Breast epithelium (tissue), 4 donors: ENCODE measurements at regions of chr6 and their contacts with region 1.

Region 1: GRCh38 chr6:91731939-91732338 is 1145.1 kb upstream of the MAP3K7 start:
- DNase-seq: no peak
- H3K4me3 ChIP-seq: no peak overlapping the region
- H3K27ac ChIP-seq: no peak overlapping the region
- H3K4me1 ChIP-seq: no peaks in the 10 kb centered on the region
- H3K27me3 ChIP-seq: no peaks in the 10 kb centered on the region
- CTCF ChIP-seq: no peak
- POLR2A ChIP-seq: no peak

Region 2: DNA sequence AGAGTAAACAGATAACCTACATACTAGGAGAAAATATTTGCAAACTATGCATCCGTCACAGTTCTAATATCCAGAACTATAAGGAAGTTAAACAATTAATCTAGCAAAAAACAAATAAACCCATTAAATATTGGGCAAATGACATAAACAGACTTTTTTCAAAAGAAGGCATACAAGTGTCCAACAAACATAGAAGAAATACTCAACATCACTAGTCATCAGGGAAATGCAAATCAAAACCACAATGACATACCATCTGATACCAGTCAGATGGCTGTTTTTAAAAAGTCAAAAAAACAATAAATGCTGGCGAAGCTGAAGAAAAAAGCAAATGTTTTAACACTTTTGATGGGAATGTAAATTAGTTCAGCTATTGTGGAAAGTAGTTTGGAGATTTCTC is 27.4 kb before region 1 on chr6:
- intact Hi-C with region 1: loop called (anchors 1 kb)
- DNase-seq: no peak
- H3K4me3 ChIP-seq: no peak overlapping the region
- H3K27ac ChIP-seq: no peak overlapping the region
- H3K4me1 ChIP-seq: no peaks in the 10 kb centered on the region
- H3K27me3 ChIP-seq: no peaks in the 10 kb centered on the region
- CTCF ChIP-seq: no peak
- POLR2A ChIP-seq: no peak